ENCODE measurements at regions of chrX and their contacts with region 1.

Region 1: GRCh38 chrX:129654419-129655165 is at the start of gene APLN:
- DNase-seq: peak; percentile 74
- H3K4me3 Mint-ChIP-seq: peak within 1 kb of the TSS; percentile 75
- H3K27ac Mint-ChIP-seq: no peak within 1 kb of the TSS
- H3K4me1 Mint-ChIP-seq: peaks cover 10% of the 10 kb centered on the region
- H3K27me3 Mint-ChIP-seq: peaks cover 25% of the 10 kb centered on the region
- total RNA-seq, gene APLN: 0.65 and 0.66 TPM in 2 replicates

Region 2: DNA sequence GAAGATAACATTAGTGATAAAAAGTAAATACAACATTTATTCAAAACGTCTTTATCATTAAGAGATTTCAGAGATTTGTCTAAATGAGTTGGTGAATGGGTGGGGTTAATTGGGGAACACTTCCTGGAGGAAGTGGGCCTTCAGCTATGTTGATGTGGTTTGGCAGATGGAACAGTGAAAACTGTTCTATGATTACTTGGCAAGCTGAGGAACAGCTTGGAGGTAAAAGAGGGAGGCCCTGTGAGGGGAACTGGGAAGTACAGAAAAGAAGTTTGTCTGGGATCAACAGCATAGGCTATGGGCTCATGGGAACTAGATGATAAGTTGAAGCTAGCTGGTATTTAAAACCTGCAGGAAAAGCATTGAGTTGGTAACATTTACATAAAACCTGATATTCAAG is 88.5 kb before region 1 on chrX:
- intact Hi-C with region 1: no loop called
- DNase-seq: no peak
- H3K4me3 Mint-ChIP-seq: no peak overlapping the region
- H3K27ac Mint-ChIP-seq: no peak overlapping the region
- H3K4me1 Mint-ChIP-seq: peaks cover 7% of the 10 kb centered on the region
- H3K27me3 Mint-ChIP-seq: no peaks in the 10 kb centered on the region

Region 3: DNA sequence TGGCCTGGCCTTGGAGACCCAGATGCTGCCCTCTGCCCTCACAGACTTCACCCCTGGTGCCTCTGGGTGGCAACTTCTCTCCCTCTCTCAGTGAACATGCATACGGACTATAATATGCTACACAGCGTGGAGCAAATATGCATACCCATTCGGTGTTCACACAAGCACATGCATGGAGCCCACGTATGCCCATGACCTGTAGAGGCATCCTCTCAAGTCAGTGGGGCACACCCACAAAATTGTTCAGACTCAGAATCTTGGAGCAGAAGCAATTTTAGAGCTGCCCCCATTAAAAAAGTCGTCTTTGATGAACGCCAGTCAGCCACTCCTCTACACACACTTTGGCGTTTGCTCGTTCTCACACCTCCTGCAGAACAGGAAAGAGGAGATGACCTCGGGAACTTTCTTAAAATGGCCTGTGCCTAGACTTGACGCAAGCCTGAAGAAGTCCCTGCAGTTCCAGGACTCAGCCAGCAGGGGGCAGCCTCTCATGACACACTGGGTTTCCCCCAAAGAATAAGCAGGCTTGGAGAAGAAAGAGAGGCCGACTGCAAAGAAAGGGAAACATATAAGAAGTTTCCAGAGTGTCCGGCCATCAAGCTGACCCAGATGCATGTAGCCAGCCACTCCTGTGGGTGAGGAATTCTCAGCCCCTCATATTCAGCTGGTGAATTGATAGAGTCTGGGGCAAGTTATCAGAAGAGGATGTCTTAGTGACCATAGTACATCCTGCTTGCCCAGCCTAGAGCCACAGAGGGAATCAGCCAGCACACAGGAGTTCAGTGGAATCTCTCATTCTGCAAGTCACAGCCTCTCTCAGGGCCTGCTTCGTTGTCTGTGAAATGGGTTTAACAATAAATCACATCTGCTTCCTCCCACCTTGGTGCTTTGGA is 17.1 kb before region 1 on chrX:
- intact Hi-C with region 1: no loop called
- DNase-seq: peak; percentile 90
- H3K4me3 Mint-ChIP-seq: no peak overlapping the region
- H3K27ac Mint-ChIP-seq: no peak overlapping the region
- H3K4me1 Mint-ChIP-seq: peaks cover 5% of the 10 kb centered on the region
- H3K27me3 Mint-ChIP-seq: no peaks in the 10 kb centered on the region

Region 4: DNA sequence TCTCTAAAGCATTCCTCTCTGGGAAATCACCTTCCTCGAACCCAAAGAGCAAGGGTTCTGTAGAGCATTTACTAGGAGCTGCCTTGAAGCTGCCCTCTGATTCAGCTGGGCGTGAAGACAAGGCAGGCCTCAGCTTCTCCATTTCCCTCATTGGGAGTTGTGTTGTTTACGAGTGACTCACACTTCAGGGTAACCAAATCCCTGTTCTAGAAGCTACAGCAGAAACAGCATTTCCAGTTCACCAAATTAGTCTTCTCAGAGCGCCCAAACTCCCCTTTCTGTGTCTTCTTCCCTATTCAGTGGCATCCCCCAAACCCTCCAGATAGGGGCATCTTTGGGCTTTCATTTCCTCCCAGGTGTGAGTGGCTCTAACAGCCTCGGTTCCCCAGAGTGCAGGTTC is 83.3 kb after region 1 on chrX:
- intact Hi-C with region 1: loop called (anchors 5 kb)
- DNase-seq: no peak
- H3K4me3 Mint-ChIP-seq: peak overlapping the region; percentile 23
- H3K27ac Mint-ChIP-seq: no peak overlapping the region
- H3K4me1 Mint-ChIP-seq: peaks cover 29% of the 10 kb centered on the region
- H3K27me3 Mint-ChIP-seq: no peaks in the 10 kb centered on the region

Region 5: GRCh38 chrX:129823115-129823514 is 168.5 kb after region 1 on chrX:
- intact Hi-C with region 1: loop called (anchors 5 kb)
- DNase-seq: peak; percentile 83
- H3K4me3 Mint-ChIP-seq: no peak overlapping the region
- H3K27ac Mint-ChIP-seq: no peak overlapping the region
- H3K4me1 Mint-ChIP-seq: peaks cover 10% of the 10 kb centered on the region
- H3K27me3 Mint-ChIP-seq: no peaks in the 10 kb centered on the region

Measured in activated CD4-positive, alpha-beta T cell treated with anti-CD3 and anti-CD28 coated beads, Interleukin-2, amount 10 ng/mL, durations not matched to agents 24 days and 14 days (primary cell).